Heart right ventricle (tissue), 16 donors: ENCODE measurements at regions of chr6 and their contacts with region 1.

Region 1: GRCh38 chr6:118372413-118372812 is 175.7 kb upstream of the PLN start:
- DNase-seq: peak; percentile 21 to 77
- ATAC-seq: peak; percentile 84 to 95 (median 90)
- H3K4me3 ChIP-seq: no peak overlapping the region
- H3K27ac ChIP-seq: peak overlapping the region; percentile 4 to 87 (median 80)
- H3K4me1 ChIP-seq: peaks cover 0 to 25% (median 6%) of the 10 kb centered on the region in 9 donors
- H3K27me3 ChIP-seq: no peaks in the 10 kb centered on the region
- CTCF ChIP-seq: no peak

Region 2: DNA sequence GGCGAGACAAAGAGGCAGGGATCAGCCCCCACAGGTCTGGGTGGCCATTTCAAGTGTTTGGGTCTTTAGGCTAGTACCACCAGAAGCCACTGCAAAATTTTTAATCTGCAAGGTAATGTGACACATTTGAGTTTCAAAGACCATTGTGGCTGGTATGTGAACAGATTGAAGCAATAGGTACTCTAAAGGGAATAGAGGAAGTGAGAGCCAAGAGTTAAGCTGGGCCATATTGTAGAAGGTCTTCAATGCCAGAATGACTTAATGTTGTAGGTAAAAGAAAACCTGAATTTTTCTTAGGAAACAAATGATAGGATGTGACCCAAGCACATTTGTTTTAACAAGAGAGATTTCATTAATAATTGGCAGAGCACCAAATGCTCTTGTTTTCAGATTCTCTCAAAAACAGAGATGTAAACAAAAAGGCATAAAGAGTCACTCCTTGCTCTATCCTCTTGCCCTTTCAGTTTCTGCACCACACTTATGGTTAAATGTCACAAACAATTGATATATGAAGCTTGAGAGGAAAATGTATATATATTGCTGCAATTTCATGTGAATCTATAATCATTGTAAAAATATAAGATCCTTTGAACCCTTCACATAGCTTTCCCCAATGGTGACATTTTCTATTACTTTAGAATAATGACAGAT is 131.4 kb before region 1 on chr6:
- intact Hi-C with region 1: no loop called
- DNase-seq: no peak
- ATAC-seq: no peak
- H3K4me3 ChIP-seq: no peak overlapping the region
- H3K27ac ChIP-seq: no peak overlapping the region
- H3K4me1 ChIP-seq: peaks cover 0 to 4% (median 0%) of the 10 kb centered on the region in 9 donors
- H3K27me3 ChIP-seq: peaks cover 0 to 3% (median 0%) of the 10 kb centered on the region in 7 donors
- CTCF ChIP-seq: no peak

Region 3: DNA sequence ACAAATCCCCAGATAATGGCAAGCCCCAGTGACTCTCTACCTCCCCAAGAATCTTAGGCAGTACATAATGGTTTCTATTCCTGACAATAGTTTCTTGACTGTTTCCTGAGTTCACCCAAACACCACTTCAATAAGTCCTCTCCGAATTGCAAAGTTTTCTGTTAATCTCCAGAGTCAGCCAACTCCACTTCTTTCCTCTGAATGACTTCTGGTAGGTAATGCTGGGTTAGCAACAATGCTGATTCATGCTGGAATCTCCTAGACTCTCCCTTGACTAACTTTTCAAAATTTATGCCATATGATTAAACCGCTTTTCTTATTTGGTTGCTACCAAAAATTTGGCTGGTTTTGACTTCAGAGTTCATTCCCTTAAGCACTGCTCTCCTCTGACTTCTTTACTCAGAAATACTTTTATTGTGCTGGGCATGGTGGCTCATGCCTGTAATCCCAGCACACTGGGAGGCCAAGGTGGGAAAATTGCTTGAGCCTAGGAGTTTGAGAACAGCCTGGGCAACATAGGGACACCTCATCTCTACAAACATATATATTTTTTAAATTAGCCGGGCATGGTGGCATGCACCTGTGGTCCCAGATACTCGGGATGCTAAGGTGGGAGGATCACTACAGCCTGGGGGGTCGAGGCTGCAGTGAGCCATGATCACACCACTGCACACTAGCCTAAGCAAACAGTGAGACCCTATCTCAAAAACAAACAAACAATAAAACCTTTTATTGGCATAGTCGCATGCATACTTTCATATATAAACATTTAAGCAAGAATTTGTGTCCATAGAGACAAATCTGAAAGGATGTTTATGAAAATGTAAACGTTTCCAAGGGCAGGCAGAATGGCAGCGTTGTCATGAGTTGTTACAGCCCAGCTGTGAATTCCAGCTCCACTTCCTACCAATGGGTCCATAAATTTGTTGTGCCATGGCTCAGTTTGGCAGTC is 73.7 kb before region 1 on chr6:
- intact Hi-C with region 1: loop called in 6 of 10 experiments (anchors 2 to 10 kb)
- DNase-seq: no peak
- ATAC-seq: no peak
- H3K4me3 ChIP-seq: no peak overlapping the region
- H3K27ac ChIP-seq: peak overlapping the region in 5 of 10 donors; percentile 47 to 84 (median 54)
- H3K4me1 ChIP-seq: peaks cover 0 to 36% (median 15%) of the 10 kb centered on the region in 9 donors
- H3K27me3 ChIP-seq: no peaks in the 10 kb centered on the region
- CTCF ChIP-seq: no peak

Region 4: GRCh38 chr6:118397671-118398465 is 25.5 kb after region 1 on chr6:
- intact Hi-C with region 1: loop called in 1 of 10 experiments (anchors 2 kb)
- DNase-seq: no peak
- ATAC-seq: peak; percentile 30 to 83 (median 58)
- H3K4me3 ChIP-seq: no peak overlapping the region
- H3K27ac ChIP-seq: peak overlapping the region in 8 of 10 donors; percentile 3 to 54 (median 30)
- H3K4me1 ChIP-seq: peaks cover 0 to 22% (median 7%) of the 10 kb centered on the region in 9 donors
- H3K27me3 ChIP-seq: no peaks in the 10 kb centered on the region
- CTCF ChIP-seq: no peak

Region 5: GRCh38 chr6:118408863-118409262 is 36.5 kb after region 1 on chr6:
- intact Hi-C with region 1: no loop called
- DNase-seq: no peak
- ATAC-seq: no peak
- H3K4me3 ChIP-seq: no peak overlapping the region
- H3K27ac ChIP-seq: no peak overlapping the region
- H3K4me1 ChIP-seq: no peaks in the 10 kb centered on the region
- H3K27me3 ChIP-seq: no peaks in the 10 kb centered on the region
- CTCF ChIP-seq: no peak

Region 6: DNA sequence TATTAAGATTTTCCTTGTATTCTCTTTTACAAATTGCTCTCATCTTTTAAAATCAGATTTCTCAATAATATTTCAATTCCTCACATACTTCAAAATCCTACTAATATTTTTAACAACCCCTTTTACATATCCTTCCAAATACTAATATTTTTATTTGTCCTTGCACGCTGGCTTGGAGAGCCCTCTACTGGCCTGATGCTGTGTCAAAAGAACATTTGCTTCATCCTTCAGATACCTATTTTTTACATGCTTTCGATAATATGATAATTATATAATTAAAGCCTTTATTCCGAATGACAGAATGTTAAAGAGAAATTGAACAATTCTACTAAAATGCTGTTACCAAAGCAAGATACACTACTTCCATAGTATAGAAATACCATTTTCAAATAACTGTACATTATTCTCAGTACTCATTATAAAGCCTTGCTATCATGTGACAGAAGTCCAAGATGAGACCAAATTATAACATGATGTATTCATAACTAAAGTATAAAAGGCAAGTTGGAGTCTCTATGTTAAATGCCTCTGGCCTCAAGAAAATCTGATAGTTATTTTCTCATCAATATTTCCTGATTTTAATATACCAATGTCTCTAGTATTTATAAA is 136.7 kb after region 1 on chr6:
- intact Hi-C with region 1: loop called in 5 of 10 experiments (anchors 2 to 10 kb)
- DNase-seq: peak in 1 of 2 donors; percentile 43
- ATAC-seq: peak in 1 of 8 donors; percentile 43
- H3K4me3 ChIP-seq: no peak overlapping the region
- H3K27ac ChIP-seq: peak overlapping the region in 8 of 10 donors; percentile 33 to 83 (median 80)
- H3K4me1 ChIP-seq: peaks cover 0 to 33% (median 17%) of the 10 kb centered on the region in 9 donors
- H3K27me3 ChIP-seq: no peaks in the 10 kb centered on the region
- CTCF ChIP-seq: peak; percentile 39 to 81 (median 71)

Region 7: DNA sequence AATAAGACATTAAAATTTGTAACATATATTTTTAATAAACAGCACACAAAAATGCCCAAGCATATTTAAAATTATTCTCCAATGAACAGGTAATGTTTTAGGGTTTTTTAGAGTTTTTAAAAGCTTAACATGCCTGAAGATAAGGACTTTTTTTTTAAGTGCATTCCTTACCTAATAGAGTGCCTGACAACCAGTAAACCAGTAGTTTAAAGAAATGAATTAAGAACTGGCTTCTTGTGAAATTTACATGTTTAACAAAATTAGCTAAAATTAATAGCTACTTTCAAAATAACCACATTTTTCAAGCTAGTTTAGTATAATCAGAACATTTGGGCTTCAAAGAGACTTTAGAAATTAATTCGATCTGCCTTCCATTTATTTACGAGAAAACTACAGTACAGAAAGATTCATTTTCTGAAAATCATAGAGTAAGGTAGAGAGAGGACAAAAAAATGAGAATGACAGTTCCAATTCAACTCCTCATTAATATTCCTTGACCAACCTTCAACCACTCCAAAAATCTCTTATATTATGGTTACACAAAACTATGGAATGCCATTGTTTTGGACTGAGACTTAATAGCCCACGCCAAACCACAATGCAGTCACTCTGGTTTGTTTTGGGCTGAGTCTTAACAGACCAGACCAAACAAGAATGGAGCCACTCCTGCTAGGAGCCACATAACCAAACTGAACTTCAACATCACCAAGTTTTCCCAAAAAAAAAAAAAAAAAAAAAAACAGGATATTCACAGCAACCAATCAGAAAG is 170.0 kb after region 1 on chr6:
- intact Hi-C with region 1: loop called in 3 of 10 experiments (anchors 5 to 10 kb)
- DNase-seq: no peak
- ATAC-seq: no peak
- H3K4me3 ChIP-seq: no peak overlapping the region
- H3K27ac ChIP-seq: peak overlapping the region in 9 of 10 donors; percentile 3 to 89 (median 83)
- H3K4me1 ChIP-seq: peaks cover 0 to 52% (median 11%) of the 10 kb centered on the region in 9 donors
- H3K27me3 ChIP-seq: no peaks in the 10 kb centered on the region
- CTCF ChIP-seq: no peak

Region 8: GRCh38 chr6:118746145-118746824 is 373.9 kb after region 1 on chr6:
- intact Hi-C with region 1: no loop called
- DNase-seq: peak in 1 of 2 donors; percentile 13
- ATAC-seq: peak in 6 of 8 donors; percentile 34 to 56 (median 46)
- H3K4me3 ChIP-seq: no peak overlapping the region
- H3K27ac ChIP-seq: peak overlapping the region in 1 of 10 donors; percentile 79
- H3K4me1 ChIP-seq: peaks cover 0 to 41% (median 15%) of the 10 kb centered on the region in 9 donors
- H3K27me3 ChIP-seq: no peaks in the 10 kb centered on the region
- CTCF ChIP-seq: no peak